ENCODE measurements at regions of chr2 and their contacts with region 1.

Region 1: GRCh38 chr2:100818606-100819369 is 1.2 kb upstream of the NPAS2 start:
- DNase-seq: peak; percentile 30 to 88
- H3K4me3 ChIP-seq: peak overlapping the region; percentile 91 to 95
- H3K27ac ChIP-seq: peak overlapping the region; percentile 95 to 96
- H3K4me1 ChIP-seq: peaks cover 1 to 11% of the 10 kb centered on the region in 2 donors
- H3K27me3 ChIP-seq: no peaks in the 10 kb centered on the region
- CTCF ChIP-seq: peak in 1 of 3 experiments; percentile 17

Region 2: GRCh38 chr2:100606726-100607343 is 212.0 kb before region 1 on chr2:
- intact Hi-C with region 1: loop called (anchors 2 kb)
- DNase-seq: peak in 1 of 2 donors; percentile 66
- H3K4me3 ChIP-seq: no peak overlapping the region
- H3K27ac ChIP-seq: no peak overlapping the region
- H3K4me1 ChIP-seq: peaks cover 5 to 10% of the 10 kb centered on the region in 2 donors
- H3K27me3 ChIP-seq: no peaks in the 10 kb centered on the region
- CTCF ChIP-seq: peak; percentile 58 to 79 (median 73)

Region 3: DNA sequence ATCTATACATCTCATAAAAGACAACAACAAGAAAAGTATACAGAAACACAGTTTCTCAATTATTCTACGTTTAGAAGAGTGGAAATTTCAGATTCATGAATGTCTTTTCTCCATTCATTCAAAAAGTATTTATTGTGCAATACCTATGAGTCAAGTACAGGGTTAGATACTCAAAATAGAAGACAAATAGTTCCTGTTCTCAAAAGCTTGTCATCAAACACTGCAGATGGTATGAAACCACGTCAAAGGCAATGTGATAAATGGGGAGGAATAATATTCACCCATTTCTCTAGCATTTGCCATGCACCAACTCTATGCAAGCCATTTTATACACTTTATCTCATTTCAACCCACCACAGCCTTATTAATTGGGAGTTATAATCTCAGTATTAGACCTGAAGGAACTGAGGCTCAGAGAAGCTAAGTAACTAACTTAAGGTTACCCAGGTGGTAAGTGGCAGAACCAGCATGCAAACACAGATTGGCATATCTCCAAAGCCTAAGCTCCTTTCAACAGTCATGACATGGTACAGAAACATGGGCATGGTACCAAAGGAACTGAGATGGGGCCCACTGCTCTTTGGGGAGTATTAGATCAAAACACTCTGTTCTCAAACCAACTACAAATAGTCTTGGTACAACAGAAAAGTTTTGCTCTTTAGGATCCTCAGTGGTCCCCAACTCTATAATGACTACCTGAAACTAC is 66.0 kb before region 1 on chr2:
- intact Hi-C with region 1: loop called (anchors 2 kb)
- DNase-seq: no peak
- H3K4me3 ChIP-seq: no peak overlapping the region
- H3K27ac ChIP-seq: peak overlapping the region; percentile 49 to 50
- H3K4me1 ChIP-seq: peaks cover 8 to 35% of the 10 kb centered on the region in 2 donors
- H3K27me3 ChIP-seq: no peaks in the 10 kb centered on the region
- CTCF ChIP-seq: no peak

Region 4: GRCh38 chr2:100924520-100925451 is 106.0 kb after region 1 on chr2:
- intact Hi-C with region 1: loop called (anchors 2 kb)
- DNase-seq: peak in 1 of 2 donors; percentile 71
- H3K4me3 ChIP-seq: peak overlapping the region; percentile 41 to 58
- H3K27ac ChIP-seq: peak overlapping the region; percentile 86 to 90
- H3K4me1 ChIP-seq: peaks cover 5 to 11% of the 10 kb centered on the region in 2 donors
- H3K27me3 ChIP-seq: no peaks in the 10 kb centered on the region
- CTCF ChIP-seq: no peak

Region 5: DNA sequence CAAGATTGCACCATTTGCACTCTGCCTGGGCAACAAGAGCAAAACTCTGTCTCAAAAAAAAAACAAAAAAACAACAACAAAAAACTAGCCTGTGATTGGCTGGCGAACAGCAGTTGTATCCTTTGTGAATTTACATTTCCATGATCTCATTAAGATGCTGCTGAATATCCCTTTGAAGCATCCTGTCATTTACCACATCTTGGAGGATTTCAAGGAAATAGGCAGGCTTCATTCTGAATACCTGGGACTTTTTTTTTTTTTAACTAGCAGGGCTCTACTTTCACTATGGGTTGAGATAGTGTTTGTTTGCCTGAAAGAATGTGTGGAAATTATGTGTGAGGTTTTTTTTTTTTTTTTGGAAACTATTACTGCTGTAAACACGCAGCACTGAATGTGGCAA is 133.7 kb after region 1 on chr2:
- intact Hi-C with region 1: no loop called
- DNase-seq: no peak
- H3K4me3 ChIP-seq: no peak overlapping the region
- H3K27ac ChIP-seq: no peak overlapping the region
- H3K4me1 ChIP-seq: no peaks in the 10 kb centered on the region
- H3K27me3 ChIP-seq: no peaks in the 10 kb centered on the region
- CTCF ChIP-seq: no peak

Region 6: GRCh38 chr2:100984892-100985379 is 166.1 kb after region 1 on chr2:
- intact Hi-C with region 1: loop called (anchors 2 kb)
- DNase-seq: peak in 1 of 2 donors; percentile 84
- H3K4me3 ChIP-seq: no peak overlapping the region
- H3K27ac ChIP-seq: peak overlapping the region; percentile 51 to 74
- H3K4me1 ChIP-seq: peaks cover 5 to 12% of the 10 kb centered on the region in 2 donors
- H3K27me3 ChIP-seq: no peaks in the 10 kb centered on the region
- CTCF ChIP-seq: peak; percentile 88 to 95 (median 90)